Naive thymus-derived CD4-positive, alpha-beta T cell (primary cell): ENCODE measurements at regions of chr15 and their contacts with region 1.

Region 1: GRCh38 chr15:50354838-50355618 is at the start of gene GABPB1:
- DNase-seq: peak; percentile 85 to 93 (median 91)
- ATAC-seq: peak; percentile 69
- H3K4me3 ChIP-seq: peak within 1 kb of the TSS; percentile 83
- H3K4me3 Mint-ChIP-seq: peak within 1 kb of the TSS; percentile 83 to 99 (median 98)
- H3K27ac ChIP-seq: peak within 1 kb of the TSS; percentile 97
- H3K27ac Mint-ChIP-seq: peak within 1 kb of the TSS; percentile 98 to 100 (median 99)
- H3K4me1 ChIP-seq: peaks cover 38 to 47% of the 10 kb centered on the region in 2 donors
- H3K4me1 Mint-ChIP-seq: peaks cover 38 to 71% (median 55%) of the 10 kb centered on the region in 7 donors
- H3K27me3 ChIP-seq: no peaks in the 10 kb centered on the region
- H3K27me3 Mint-ChIP-seq: peaks cover 0 to 12% (median 0%) of the 10 kb centered on the region in 5 donors
- total RNA-seq, gene GABPB1: 14.7 to 42.7 (median 16.8) TPM

Region 2: DNA sequence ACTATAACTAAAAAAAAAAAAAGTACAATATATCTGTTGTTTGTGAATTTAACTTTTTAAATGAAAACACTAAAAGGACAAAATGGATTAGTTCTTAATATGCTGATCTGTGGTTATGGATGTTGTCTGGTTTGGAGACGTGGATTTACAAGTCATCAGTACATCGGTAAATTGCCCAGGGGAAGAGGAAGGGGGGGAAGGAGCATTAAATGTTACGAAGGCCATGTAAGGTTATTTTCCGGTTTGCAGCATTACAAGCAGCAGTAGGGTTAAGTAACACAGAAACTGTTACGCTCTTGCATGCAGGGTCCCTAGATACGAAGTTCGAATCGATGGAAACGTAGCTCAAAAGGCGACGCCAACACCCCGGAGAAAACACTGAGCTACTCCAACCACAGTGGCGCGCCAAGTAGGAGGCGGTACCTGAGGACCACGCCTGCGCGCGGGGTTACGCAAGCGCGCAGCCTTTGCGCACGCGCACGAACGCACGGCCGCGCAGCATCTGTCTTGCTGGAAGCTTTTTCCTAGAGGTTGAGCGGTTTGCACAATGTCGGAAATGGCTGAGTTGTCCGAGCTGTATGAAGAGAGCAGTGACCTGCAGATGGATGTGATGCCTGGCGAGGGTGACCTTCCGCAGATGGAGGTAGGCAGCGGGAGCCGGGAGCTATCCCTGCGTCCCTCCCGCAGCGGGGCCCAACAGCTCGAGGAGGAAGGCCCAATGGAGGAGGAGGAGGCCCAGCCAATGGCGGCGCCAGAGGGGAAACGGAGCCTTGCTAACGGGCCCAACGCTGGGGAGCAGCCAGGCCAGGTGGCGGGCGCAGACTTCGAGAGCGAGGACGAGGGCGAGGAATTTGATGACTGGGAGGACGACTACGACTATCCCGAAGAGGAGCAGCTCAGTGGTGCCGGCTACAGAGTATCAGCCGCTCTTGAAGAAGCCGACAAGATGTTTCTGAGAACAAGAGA is 1477.1 kb before region 1 on chr15 and contains the start of gene EID1:
- CTCF ChIA-PET with region 1: no interaction called
- POLR2A ChIA-PET with region 1: interaction called, 7 read pairs
- intact Hi-C with region 1: loop called (anchors 1 kb)
- DNase-seq: peak; percentile 87 to 94 (median 92)
- ATAC-seq: peak; percentile 95
- H3K4me3 ChIP-seq: peak within 1 kb of the TSS; percentile 75
- H3K4me3 Mint-ChIP-seq: peak within 1 kb of the TSS; percentile 93 to 100 (median 99)
- H3K27ac ChIP-seq: peak within 1 kb of the TSS; percentile 70
- H3K27ac Mint-ChIP-seq: peak within 1 kb of the TSS; percentile 95 to 99 (median 98)
- H3K4me1 ChIP-seq: peaks cover 4 to 17% of the 10 kb centered on the region in 2 donors
- H3K4me1 Mint-ChIP-seq: peaks cover 11 to 48% (median 26%) of the 10 kb centered on the region in 7 donors
- H3K27me3 ChIP-seq: no peaks in the 10 kb centered on the region
- H3K27me3 Mint-ChIP-seq: peaks cover 0 to 25% (median 15%) of the 10 kb centered on the region in 5 donors
- total RNA-seq, gene EID1: 40.3 to 96.0 (median 56.5) TPM

Region 3: GRCh38 chr15:49169880-49170597 is 1185.0 kb before region 1 on chr15 and contains the start of gene GALK2:
- CTCF ChIA-PET with region 1: no interaction called
- POLR2A ChIA-PET with region 1: no interaction called
- intact Hi-C with region 1: loop called (anchors 1 to 5 kb)
- DNase-seq: peak; percentile 42 to 90 (median 75)
- ATAC-seq: peak; percentile 96
- H3K4me3 ChIP-seq: peak within 1 kb of the TSS; percentile 88
- H3K4me3 Mint-ChIP-seq: peak within 1 kb of the TSS; percentile 91 to 100 (median 98)
- H3K27ac ChIP-seq: peak within 1 kb of the TSS; percentile 88
- H3K27ac Mint-ChIP-seq: peak within 1 kb of the TSS; percentile 94 to 99 (median 98)
- H3K4me1 ChIP-seq: peaks cover 4 to 14% of the 10 kb centered on the region in 2 donors
- H3K4me1 Mint-ChIP-seq: peaks cover 24 to 56% (median 46%) of the 10 kb centered on the region in 7 donors
- H3K27me3 ChIP-seq: no peaks in the 10 kb centered on the region
- H3K27me3 Mint-ChIP-seq: no peaks in the 10 kb centered on the region
- total RNA-seq, gene GALK2: 19.4 to 36.6 (median 28.7) TPM

Region 4: DNA sequence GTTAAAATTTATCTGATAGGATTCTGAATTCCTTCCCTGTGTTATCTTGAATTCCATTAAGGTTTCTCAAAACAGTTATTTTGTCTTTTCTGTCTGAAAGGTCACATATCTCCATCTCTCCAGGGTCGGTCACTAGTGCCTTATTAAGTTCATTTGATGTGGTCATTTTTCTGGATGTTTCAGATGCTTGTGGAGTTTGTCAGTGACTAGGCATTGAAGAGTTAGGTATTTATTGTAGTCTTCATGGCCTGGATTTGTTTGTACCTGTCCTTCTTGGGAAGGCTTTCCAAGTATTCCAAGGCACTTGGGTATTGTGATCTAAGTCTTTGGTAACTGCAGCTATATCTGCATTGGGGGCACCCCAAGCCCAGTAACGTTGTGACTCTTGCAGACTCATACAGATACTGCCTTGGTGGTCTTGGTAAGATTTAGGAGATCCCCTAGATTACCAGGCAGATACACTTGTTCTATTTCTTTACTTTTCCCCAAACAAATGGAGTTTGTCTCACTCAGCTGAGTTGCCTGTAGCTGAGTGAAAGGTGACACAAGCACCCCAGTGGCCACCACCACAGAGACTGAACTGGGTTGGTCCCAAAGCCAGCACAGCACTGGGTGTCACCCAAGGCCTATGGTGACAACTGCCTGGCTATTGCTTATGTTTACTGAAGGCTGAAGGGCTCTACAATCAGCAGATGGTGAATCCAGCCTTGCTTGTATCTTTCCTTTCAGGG is 191.9 kb before region 1 on chr15:
- CTCF ChIA-PET with region 1: no interaction called
- POLR2A ChIA-PET with region 1: no interaction called
- intact Hi-C with region 1: no loop called
- DNase-seq: no peak
- ATAC-seq: peak; percentile 10
- H3K4me3 ChIP-seq: no peak overlapping the region
- H3K4me3 Mint-ChIP-seq: no peak overlapping the region
- H3K27ac ChIP-seq: no peak overlapping the region
- H3K27ac Mint-ChIP-seq: no peak overlapping the region
- H3K4me1 ChIP-seq: no peaks in the 10 kb centered on the region
- H3K4me1 Mint-ChIP-seq: no peaks in the 10 kb centered on the region
- H3K27me3 ChIP-seq: no peaks in the 10 kb centered on the region
- H3K27me3 Mint-ChIP-seq: peaks cover 12 to 34% (median 26%) of the 10 kb centered on the region in 5 donors

Region 5: GRCh38 chr15:50202003-50202770 is 152.8 kb before region 1 on chr15:
- CTCF ChIA-PET with region 1: no interaction called
- POLR2A ChIA-PET with region 1: no interaction called
- intact Hi-C with region 1: no loop called
- DNase-seq: no peak
- ATAC-seq: no peak
- H3K4me3 ChIP-seq: no peak overlapping the region
- H3K4me3 Mint-ChIP-seq: no peak overlapping the region
- H3K27ac ChIP-seq: no peak overlapping the region
- H3K27ac Mint-ChIP-seq: no peak overlapping the region
- H3K4me1 ChIP-seq: no peaks in the 10 kb centered on the region
- H3K4me1 Mint-ChIP-seq: no peaks in the 10 kb centered on the region
- H3K27me3 ChIP-seq: no peaks in the 10 kb centered on the region
- H3K27me3 Mint-ChIP-seq: no peaks in the 10 kb centered on the region

Region 6: DNA sequence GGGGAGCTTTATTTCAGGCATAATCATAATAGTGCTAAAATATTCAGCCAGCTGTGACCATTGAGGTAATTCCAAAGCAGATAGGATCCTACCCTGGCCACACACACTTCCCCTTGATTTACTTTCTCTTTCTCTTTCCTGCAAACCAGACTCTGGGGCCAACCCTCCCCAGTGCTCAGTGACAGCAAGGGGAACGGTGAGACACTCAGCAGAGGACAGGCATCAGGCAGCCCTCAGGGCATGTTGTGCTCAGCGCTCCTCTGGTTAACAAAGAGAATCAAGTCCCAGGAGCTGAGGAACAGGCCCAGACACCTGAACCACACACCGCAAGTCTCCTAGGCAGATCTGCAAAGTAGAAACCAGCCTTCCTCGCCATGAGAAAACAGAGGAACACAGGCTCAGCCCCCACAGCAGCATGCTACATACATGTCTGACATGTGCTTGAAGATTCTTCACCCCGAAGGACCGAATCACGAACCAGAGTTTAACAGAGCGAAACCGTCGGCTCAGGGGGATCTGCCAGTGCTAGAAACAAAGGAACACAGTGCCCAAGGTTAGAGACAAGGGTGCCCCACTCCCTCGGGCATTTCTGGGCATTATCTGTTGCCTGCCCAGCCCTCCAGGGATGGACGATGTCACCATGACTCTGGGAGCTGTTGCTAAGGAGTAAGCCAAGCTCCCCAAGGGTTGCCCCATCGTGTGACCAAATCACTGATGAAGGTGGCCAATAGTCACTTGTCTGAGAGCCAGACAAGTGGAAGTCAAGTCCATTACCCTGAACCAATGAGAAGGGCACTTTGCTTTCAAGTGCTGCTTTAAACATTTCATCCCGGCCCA is 107.0 kb before region 1 on chr15:
- CTCF ChIA-PET with region 1: no interaction called
- POLR2A ChIA-PET with region 1: interaction called, 3 read pairs
- intact Hi-C with region 1: loop called (anchors 2 to 5 kb)
- DNase-seq: peak in 8 of 9 donors; percentile 18 to 62 (median 53)
- ATAC-seq: peak; percentile 93
- H3K4me3 ChIP-seq: peak overlapping the region; percentile 53
- H3K4me3 Mint-ChIP-seq: peak overlapping the region; percentile 55 to 88 (median 84)
- H3K27ac ChIP-seq: peak overlapping the region; percentile 53
- H3K27ac Mint-ChIP-seq: peak overlapping the region; percentile 89 to 99 (median 94)
- H3K4me1 ChIP-seq: peaks cover 8 to 12% of the 10 kb centered on the region in 2 donors
- H3K4me1 Mint-ChIP-seq: peaks cover 7 to 65% (median 22%) of the 10 kb centered on the region in 7 donors
- H3K27me3 ChIP-seq: no peaks in the 10 kb centered on the region
- H3K27me3 Mint-ChIP-seq: peaks cover 0 to 5% (median 0%) of the 10 kb centered on the region in 5 donors

Region 7: DNA sequence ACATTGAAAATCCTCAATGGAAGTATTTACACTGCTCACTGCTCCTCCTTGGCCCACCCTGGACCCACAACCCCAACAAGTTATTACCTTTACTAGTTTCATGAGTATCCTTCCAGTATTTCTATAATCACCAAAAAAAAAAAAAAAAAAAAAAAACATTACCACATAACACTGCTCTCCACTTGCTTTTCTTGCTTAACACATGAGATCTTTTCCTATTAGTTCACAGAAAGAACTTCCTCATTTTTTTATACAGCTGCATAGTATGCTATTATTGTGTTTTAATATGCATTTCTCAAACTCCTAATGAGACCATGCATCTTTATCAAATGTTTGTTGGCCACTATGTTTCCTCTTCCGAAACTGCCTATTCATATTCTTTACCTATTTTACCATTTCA is 14.6 kb before region 1 on chr15:
- CTCF ChIA-PET with region 1: no interaction called
- POLR2A ChIA-PET with region 1: interaction called, 37 read pairs
- intact Hi-C with region 1: loop called (anchors 1 to 2 kb)
- DNase-seq: no peak
- ATAC-seq: peak; percentile 53
- H3K4me3 ChIP-seq: no peak overlapping the region
- H3K4me3 Mint-ChIP-seq: no peak overlapping the region
- H3K27ac ChIP-seq: no peak overlapping the region
- H3K27ac Mint-ChIP-seq: no peak overlapping the region
- H3K4me1 ChIP-seq: no peaks in the 10 kb centered on the region
- H3K4me1 Mint-ChIP-seq: peaks cover 5 to 31% (median 15%) of the 10 kb centered on the region in 7 donors
- H3K27me3 ChIP-seq: no peaks in the 10 kb centered on the region
- H3K27me3 Mint-ChIP-seq: no peaks in the 10 kb centered on the region

Region 8: DNA sequence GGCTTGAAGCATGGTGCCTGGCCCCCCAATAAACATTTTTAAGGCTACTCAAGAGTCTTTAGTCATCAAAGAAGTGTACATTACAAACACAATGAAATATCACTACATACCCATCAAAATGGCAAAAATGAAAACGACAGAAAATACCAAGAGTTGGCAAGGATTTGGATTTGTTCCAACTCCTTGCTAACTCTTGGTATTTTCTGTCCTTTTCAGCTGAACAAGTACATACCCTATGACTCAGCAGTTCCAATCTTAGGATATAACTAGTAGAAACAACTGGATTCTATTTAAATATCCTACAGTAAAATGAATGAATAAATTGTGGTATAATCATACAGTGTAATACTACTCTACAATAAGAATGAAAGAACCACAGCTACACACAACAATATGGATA is 25.1 kb after region 1 on chr15:
- CTCF ChIA-PET with region 1: no interaction called
- POLR2A ChIA-PET with region 1: no interaction called
- intact Hi-C with region 1: no loop called
- DNase-seq: no peak
- ATAC-seq: no peak
- H3K4me3 ChIP-seq: no peak overlapping the region
- H3K4me3 Mint-ChIP-seq: no peak overlapping the region
- H3K27ac ChIP-seq: no peak overlapping the region
- H3K27ac Mint-ChIP-seq: no peak overlapping the region
- H3K4me1 ChIP-seq: no peaks in the 10 kb centered on the region
- H3K4me1 Mint-ChIP-seq: peaks cover 0 to 12% (median 5%) of the 10 kb centered on the region in 7 donors
- H3K27me3 ChIP-seq: no peaks in the 10 kb centered on the region
- H3K27me3 Mint-ChIP-seq: no peaks in the 10 kb centered on the region

Region 9: GRCh38 chr15:50765195-50765973 is 410.4 kb after region 1 on chr15 and contains the start of gene SPPL2A:
- CTCF ChIA-PET with region 1: interaction called, 4 read pairs
- POLR2A ChIA-PET with region 1: no interaction called
- intact Hi-C with region 1: loop called (anchors 1 to 10 kb)
- DNase-seq: peak; percentile 45 to 90 (median 61)
- ATAC-seq: peak; percentile 91
- H3K4me3 ChIP-seq: peak within 1 kb of the TSS; percentile 77
- H3K4me3 Mint-ChIP-seq: peak within 1 kb of the TSS; percentile 81 to 97 (median 94)
- H3K27ac ChIP-seq: peak within 1 kb of the TSS; percentile 90
- H3K27ac Mint-ChIP-seq: peak within 1 kb of the TSS; percentile 85 to 98 (median 93)
- H3K4me1 ChIP-seq: no peaks in the 10 kb centered on the region
- H3K4me1 Mint-ChIP-seq: peaks cover 27 to 58% (median 51%) of the 10 kb centered on the region in 7 donors
- H3K27me3 ChIP-seq: no peaks in the 10 kb centered on the region
- H3K27me3 Mint-ChIP-seq: no peaks in the 10 kb centered on the region
- total RNA-seq, gene SPPL2A: 42.1 to 100 (median 58.1) TPM